Activated CD8-positive, alpha-beta T cell treated with anti-CD3 and anti-CD28 coated beads for 36 hours (primary cell): ENCODE measurements at regions of chr2 and their contacts with region 1.

Region 1: DNA sequence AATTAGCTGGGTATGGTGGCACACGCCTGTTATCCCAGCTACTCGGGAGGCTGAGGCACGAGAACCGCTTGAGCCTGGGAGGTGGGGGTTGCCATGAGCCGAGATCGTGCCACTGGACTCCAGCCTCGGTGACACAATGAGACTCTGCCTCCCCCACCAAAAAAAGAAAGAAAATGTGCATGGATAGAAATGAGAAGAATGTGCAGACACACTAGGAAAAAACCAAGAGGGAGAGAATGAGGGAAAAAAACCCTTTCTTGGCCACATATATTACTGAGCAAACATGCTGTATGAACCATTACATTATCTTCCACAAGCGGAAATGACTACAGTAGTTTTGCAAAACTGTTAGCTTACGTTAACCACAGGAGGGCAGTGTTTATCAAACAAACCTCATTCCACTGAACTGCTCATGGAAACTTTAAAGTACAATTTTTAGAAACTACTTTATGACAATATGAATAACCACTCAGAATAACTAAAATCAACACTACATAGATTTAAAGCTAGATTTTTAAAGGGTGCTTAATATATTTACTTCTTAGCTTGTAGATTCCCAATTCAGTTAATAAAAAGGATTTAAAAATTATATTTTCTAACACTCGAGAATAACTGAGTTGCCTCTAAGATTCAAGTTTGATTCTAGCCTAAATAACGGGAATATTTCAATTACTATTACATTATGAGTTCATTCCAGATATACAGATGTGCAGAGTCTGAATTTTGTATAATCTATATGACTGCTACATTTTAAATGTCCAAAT is 26.4 kb downstream of the ASXL2 start:
- DNase-seq: peak; percentile 37
- ATAC-seq: peak; percentile 91
- H3K4me3 Mint-ChIP-seq: peak overlapping the region; percentile 55
- H3K27ac Mint-ChIP-seq: peak overlapping the region; percentile 88
- H3K4me1 Mint-ChIP-seq: peaks cover 47% of the 10 kb centered on the region
- H3K27me3 Mint-ChIP-seq: no peaks in the 10 kb centered on the region
- CTCF ChIP-seq: peak; percentile 63

Region 2: GRCh38 chr2:25606892-25607291 is 245.0 kb before region 1 on chr2:
- CTCF ChIA-PET with region 1: interaction called, 40 read pairs
- POLR2A ChIA-PET with region 1: no interaction called
- intact Hi-C with region 1: no loop called
- DNase-seq: peak; percentile 15
- ATAC-seq: peak; percentile 60
- H3K4me3 Mint-ChIP-seq: no peak overlapping the region
- H3K27ac Mint-ChIP-seq: no peak overlapping the region
- H3K4me1 Mint-ChIP-seq: peaks cover 5% of the 10 kb centered on the region
- H3K27me3 Mint-ChIP-seq: no peaks in the 10 kb centered on the region
- CTCF ChIP-seq: peak; percentile 86

Region 3: GRCh38 chr2:25664183-25664964 is 187.5 kb before region 1 on chr2:
- CTCF ChIA-PET with region 1: no interaction called
- POLR2A ChIA-PET with region 1: no interaction called
- intact Hi-C with region 1: no loop called
- DNase-seq: peak; percentile 56
- ATAC-seq: peak; percentile 60
- H3K4me3 Mint-ChIP-seq: peak overlapping the region; percentile 31
- H3K27ac Mint-ChIP-seq: no peak overlapping the region
- H3K4me1 Mint-ChIP-seq: peaks cover 15% of the 10 kb centered on the region
- H3K27me3 Mint-ChIP-seq: no peaks in the 10 kb centered on the region
- CTCF ChIP-seq: peak; percentile 33

Region 4: DNA sequence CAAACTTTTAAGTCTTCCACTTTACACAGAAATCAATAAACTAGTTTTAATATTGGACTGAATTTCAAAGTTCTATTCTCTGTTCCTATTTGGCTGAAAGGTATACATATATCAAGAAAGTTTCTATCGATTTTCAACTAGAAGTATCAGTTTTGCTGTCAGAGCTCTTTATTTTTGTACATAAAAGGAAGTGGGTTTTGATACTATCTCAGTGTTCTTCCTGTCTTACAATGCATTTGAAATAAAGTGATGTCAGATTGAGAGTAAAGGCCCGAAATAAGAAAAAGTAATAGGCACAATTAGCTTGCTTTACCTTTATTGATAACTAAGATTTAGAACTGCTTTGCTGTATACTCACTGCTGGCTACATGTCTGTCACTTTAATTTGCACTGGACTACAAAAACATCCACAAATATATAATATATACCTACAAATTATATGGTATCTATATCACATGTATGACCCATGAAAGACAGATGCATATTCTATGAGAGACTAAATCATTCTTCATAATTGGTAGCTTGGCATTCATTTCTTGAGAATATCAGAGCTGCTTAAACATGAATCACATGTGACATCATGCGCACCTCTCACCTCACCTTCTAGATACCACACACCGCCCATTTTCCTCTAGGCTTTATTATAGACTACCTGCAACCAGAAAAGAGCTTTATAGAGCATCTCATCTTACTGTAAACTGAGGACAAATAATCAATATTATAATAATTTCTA is 57.2 kb before region 1 on chr2:
- CTCF ChIA-PET with region 1: interaction called, 20 read pairs
- POLR2A ChIA-PET with region 1: interaction called, 4 read pairs
- intact Hi-C with region 1: no loop called
- DNase-seq: peak; percentile 52
- ATAC-seq: peak; percentile 57
- H3K4me3 Mint-ChIP-seq: peak overlapping the region; percentile 80
- H3K27ac Mint-ChIP-seq: peak overlapping the region; percentile 92
- H3K4me1 Mint-ChIP-seq: peaks cover 84% of the 10 kb centered on the region
- H3K27me3 Mint-ChIP-seq: no peaks in the 10 kb centered on the region
- CTCF ChIP-seq: no peak

Region 5: DNA sequence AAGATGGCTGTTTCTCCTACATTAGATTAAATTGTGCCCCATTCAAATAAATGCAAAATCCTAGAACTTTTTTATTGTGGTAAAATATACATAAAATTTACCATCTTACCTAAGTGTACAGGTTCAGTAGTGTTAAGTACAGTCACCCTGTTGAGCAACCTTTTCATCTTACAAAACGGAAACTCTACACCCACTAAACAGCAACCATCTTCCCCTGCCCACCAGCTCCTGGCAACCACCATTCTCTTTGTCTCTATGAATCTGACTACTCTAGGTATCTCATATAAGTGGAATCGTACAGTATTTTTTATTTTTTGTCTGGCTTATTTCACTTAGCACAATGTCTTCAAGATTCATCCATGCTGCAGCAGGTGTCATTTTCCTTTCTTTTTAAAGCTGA is 26.7 kb before region 1 on chr2:
- CTCF ChIA-PET with region 1: interaction called, 19 read pairs
- POLR2A ChIA-PET with region 1: interaction called, 11 read pairs
- intact Hi-C with region 1: no loop called
- DNase-seq: peak; percentile 82
- ATAC-seq: peak; percentile 85
- H3K4me3 Mint-ChIP-seq: peak overlapping the region; percentile 65
- H3K27ac Mint-ChIP-seq: peak overlapping the region; percentile 93
- H3K4me1 Mint-ChIP-seq: peaks cover 71% of the 10 kb centered on the region
- H3K27me3 Mint-ChIP-seq: no peaks in the 10 kb centered on the region
- CTCF ChIP-seq: no peak

Region 6: DNA sequence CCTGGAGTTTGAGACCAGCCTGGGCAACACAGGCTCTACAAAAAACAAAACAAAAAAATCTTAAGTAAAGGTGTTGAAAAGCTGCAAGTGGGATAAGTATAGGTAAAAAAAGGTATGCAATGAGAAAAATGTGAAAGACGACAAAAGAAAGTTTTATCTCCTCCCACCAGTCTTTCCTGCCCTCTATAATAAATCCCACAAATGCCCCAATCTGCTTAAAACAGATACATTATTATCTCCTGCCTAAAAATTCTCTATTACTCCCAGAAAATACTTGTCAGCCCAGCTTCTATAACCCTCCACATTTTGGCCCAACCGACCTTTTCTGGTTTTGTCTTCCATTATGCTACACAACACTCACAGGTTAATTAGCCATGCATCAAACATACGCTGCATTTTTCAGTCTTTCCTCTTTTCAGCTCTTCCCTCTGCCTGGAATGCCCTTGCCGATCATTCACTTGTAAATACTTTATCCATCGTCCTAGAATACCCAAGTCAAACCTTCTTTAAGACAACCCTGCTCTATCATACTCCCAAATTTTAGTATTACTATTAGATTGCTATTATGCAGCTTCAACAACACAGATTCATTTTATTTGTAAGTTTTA is 15.6 kb after region 1 on chr2:
- CTCF ChIA-PET with region 1: interaction called, 30 read pairs
- POLR2A ChIA-PET with region 1: interaction called, 3 read pairs
- intact Hi-C with region 1: no loop called
- DNase-seq: no peak
- ATAC-seq: no peak
- H3K4me3 Mint-ChIP-seq: no peak overlapping the region
- H3K27ac Mint-ChIP-seq: no peak overlapping the region
- H3K4me1 Mint-ChIP-seq: peaks cover 22% of the 10 kb centered on the region
- H3K27me3 Mint-ChIP-seq: no peaks in the 10 kb centered on the region
- CTCF ChIP-seq: no peak

Region 7: GRCh38 chr2:25951071-25951547 is 99.2 kb after region 1 on chr2:
- CTCF ChIA-PET with region 1: interaction called, 29 read pairs
- POLR2A ChIA-PET with region 1: interaction called, 3 read pairs
- intact Hi-C with region 1: no loop called
- DNase-seq: peak; percentile 77
- ATAC-seq: peak; percentile 95
- H3K4me3 Mint-ChIP-seq: no peak overlapping the region
- H3K27ac Mint-ChIP-seq: no peak overlapping the region
- H3K4me1 Mint-ChIP-seq: no peaks in the 10 kb centered on the region
- H3K27me3 Mint-ChIP-seq: no peaks in the 10 kb centered on the region
- CTCF ChIP-seq: peak; percentile 87